Sigmoid colon (tissue), 7 donors: ENCODE measurements at regions of chr13 and their contacts with region 1.

Region 1: DNA sequence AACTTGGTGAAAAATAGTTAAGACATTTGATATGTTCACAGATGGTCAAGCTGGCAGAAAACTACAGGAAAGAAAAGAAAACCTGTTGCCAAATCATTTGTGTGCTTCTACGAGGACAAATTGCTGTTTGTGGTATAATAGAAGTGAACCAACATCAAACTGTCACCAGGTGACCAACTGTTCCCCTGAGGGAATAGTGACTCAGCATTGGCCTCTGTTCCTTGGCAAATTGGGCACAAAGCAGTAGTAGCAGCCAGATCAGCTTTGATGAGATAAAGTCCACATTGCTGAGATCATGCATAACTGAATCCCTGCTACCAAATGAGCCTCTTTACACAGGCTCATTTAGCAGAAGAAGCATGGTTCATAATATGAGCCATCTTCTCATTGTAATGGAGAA is 103.5 kb downstream of the POSTN start:
- DNase-seq: no peak
- H3K4me3 ChIP-seq: no peak overlapping the region
- H3K27ac ChIP-seq: peak overlapping the region in 1 of 4 donors; percentile 73
- H3K4me1 ChIP-seq: peaks cover 0 to 29% (median 20%) of the 10 kb centered on the region in 4 donors
- H3K27me3 ChIP-seq: no peaks in the 10 kb centered on the region
- CTCF ChIP-seq: no peak
- EP300 ChIP-seq: no peak
- POLR2A ChIP-seq: no peak

Region 2: DNA sequence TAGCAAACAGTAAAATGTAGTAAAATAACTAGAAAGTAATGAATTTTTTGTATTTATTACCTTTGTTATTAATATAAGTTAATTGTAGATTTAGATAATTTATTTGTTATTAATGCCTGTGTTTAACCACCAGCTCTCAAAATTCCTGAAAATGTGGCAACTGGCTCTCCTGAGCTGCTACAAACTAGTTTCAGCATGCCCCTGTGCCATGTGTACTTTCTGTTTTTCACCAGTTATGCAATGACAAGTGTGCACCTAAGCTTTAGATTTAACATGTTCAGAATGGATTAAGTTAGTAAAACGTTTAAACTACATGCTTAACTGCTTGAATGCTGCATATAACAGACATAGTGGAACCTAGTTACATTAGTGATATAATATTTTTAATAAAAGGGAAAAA is 15.4 kb after region 1 on chr13:
- intact Hi-C with region 1: loop called (anchors 2 kb)
- DNase-seq: no peak
- H3K4me3 ChIP-seq: no peak overlapping the region
- H3K27ac ChIP-seq: no peak overlapping the region
- H3K4me1 ChIP-seq: no peaks in the 10 kb centered on the region
- H3K27me3 ChIP-seq: no peaks in the 10 kb centered on the region
- CTCF ChIP-seq: no peak
- EP300 ChIP-seq: no peak
- POLR2A ChIP-seq: no peak